ENCODE measurements at regions of chr11 and their contacts with region 1.

Region 1: DNA sequence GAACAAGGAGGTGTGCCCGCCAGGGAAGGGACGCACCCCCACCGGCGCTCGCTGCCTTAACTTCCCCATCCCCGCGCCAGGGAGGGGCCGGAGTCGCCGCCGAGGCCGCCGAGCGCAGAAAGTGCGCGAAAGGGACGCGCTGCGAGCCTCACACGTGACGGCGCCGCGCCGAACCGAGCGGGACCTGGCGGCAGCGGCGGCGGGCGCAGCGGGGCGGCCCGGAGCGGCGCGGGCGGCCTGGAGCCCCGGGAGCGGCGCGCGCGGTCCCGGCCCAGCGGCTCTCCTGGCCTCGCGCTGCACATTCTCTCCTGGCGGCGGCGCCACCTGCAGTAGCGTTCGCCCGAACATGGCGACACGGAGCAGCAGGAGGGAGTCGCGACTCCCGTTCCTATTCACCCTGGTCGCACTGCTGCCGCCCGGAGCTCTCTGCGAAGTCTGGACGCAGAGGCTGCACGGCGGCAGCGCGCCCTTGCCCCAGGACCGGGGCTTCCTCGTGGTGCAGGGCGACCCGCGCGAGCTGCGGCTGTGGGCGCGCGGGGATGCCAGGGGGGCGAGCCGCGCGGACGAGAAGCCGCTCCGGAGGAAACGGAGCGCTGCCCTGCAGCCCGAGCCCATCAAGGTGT is at the start of gene SORL1:
- DNase-seq: peak; percentile 72 to 87
- ATAC-seq: peak; percentile 57 to 75 (median 70)
- H3K4me3 ChIP-seq: peak within 1 kb of the TSS; percentile 89
- H3K4me3 Mint-ChIP-seq: peak within 1 kb of the TSS; percentile 99
- H3K27ac ChIP-seq: peak within 1 kb of the TSS; percentile 82
- H3K27ac Mint-ChIP-seq: peak within 1 kb of the TSS; percentile 98 to 99
- H3K4me1 ChIP-seq: peaks cover 80% of the 10 kb centered on the region
- H3K4me1 Mint-ChIP-seq: peaks cover 89% of the 10 kb centered on the region in 2 donors
- H3K27me3 ChIP-seq: no peaks in the 10 kb centered on the region
- H3K27me3 Mint-ChIP-seq: no peaks in the 10 kb centered on the region
- CTCF ChIP-seq: peak; percentile 42
- total RNA-seq, gene SORL1: 386 to 519 (median 456) TPM

Region 2: GRCh38 chr11:121292495-121293287 is 159.4 kb before region 1 on chr11 and contains the start of gene SC5D:
- intact Hi-C with region 1: loop called (anchors 2 kb)
- DNase-seq: peak; percentile 95 to 98
- ATAC-seq: peak; percentile 92 to 98 (median 95)
- H3K4me3 ChIP-seq: peak within 1 kb of the TSS; percentile 63
- H3K4me3 Mint-ChIP-seq: peak within 1 kb of the TSS; percentile 97
- H3K27ac ChIP-seq: peak within 1 kb of the TSS; percentile 89
- H3K27ac Mint-ChIP-seq: peak within 1 kb of the TSS; percentile 96 to 99
- H3K4me1 ChIP-seq: peaks cover 10% of the 10 kb centered on the region
- H3K4me1 Mint-ChIP-seq: peaks cover 32 to 42% of the 10 kb centered on the region in 2 donors
- H3K27me3 ChIP-seq: no peaks in the 10 kb centered on the region
- H3K27me3 Mint-ChIP-seq: no peaks in the 10 kb centered on the region
- CTCF ChIP-seq: no peak
- total RNA-seq, gene SC5D: 17.2 to 18.6 (median 17.2) TPM

Region 3: DNA sequence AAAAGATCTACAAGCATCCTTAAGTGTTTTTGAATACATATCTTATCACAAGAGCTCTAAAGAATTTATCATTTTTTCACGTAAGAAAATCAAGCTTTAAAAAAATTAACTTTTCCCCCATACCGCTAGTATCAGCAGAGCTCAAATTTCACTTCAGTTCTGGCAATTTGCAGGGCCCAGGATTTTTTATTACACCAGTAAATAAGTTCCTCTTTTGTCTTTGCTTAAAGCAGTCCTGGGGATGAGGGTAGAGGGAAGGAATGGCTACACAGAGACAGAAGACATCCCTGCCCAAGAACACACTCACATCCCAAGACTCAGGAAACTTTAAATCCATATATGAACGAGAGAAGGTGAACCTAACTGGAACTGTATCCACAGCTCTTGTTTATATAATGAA is 22.5 kb before region 1 on chr11:
- intact Hi-C with region 1: loop called (anchors 2 kb)
- DNase-seq: no peak
- ATAC-seq: no peak
- H3K4me3 ChIP-seq: no peak overlapping the region
- H3K4me3 Mint-ChIP-seq: no peak overlapping the region
- H3K27ac ChIP-seq: peak overlapping the region; percentile 34
- H3K27ac Mint-ChIP-seq: no peak overlapping the region
- H3K4me1 ChIP-seq: peaks cover 10% of the 10 kb centered on the region
- H3K4me1 Mint-ChIP-seq: peaks cover 5% of the 10 kb centered on the region in 2 donors
- H3K27me3 ChIP-seq: no peaks in the 10 kb centered on the region
- H3K27me3 Mint-ChIP-seq: peaks cover 0 to 3% of the 10 kb centered on the region in 2 donors
- CTCF ChIP-seq: no peak

Region 4: DNA sequence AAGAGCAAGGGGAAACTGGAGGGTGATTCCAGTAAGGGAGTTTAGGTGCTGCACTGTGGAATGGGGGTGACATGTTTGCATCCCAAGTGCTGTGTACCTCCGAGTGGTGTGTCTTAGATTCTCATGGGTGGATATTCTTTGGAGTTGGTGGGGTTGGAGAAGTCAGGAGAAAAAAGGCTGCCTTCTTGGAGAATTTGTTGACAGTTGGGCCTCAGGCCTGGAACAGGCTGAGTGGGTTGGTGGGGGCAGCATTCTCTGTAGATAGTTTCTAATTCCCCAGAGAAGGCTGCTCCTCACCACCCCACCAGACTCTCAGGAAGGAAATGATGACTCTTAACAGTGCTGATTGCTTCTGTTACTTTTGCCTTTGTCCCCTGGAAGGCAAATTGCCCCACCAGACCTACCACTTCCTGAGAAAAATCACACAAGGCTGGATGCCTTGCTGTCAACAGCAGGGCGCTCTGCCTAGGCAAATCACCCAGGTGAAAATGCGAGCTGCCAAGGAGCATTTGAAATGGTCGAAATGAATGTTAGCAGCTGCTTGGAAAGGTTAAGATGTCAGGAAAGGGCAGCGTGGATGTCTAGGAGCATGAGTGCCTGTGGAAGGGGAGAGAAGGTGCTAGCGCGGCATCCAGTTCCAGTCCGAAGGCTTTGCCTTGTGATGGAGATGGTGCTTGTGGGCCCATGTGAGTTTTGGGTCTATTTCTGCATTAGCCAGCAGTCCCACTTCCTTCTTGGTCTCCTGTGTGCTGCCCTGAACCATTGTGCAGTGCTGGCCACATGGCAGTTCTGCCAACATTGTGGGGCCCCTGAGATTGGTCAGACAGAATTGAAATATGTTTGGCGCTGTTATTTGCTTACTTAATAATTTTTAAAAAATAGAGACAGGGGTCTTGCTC is 30.4 kb after region 1 on chr11:
- intact Hi-C with region 1: loop called (anchors 1 kb)
- DNase-seq: peak; percentile 72 to 87
- ATAC-seq: peak; percentile 69 to 87 (median 77)
- H3K4me3 ChIP-seq: peak overlapping the region; percentile 41
- H3K4me3 Mint-ChIP-seq: peak overlapping the region; percentile 89
- H3K27ac ChIP-seq: peak overlapping the region; percentile 93
- H3K27ac Mint-ChIP-seq: peak overlapping the region; percentile 94 to 95
- H3K4me1 ChIP-seq: peaks cover 94% of the 10 kb centered on the region
- H3K4me1 Mint-ChIP-seq: peaks cover 59 to 87% of the 10 kb centered on the region in 2 donors
- H3K27me3 ChIP-seq: no peaks in the 10 kb centered on the region
- H3K27me3 Mint-ChIP-seq: no peaks in the 10 kb centered on the region
- CTCF ChIP-seq: no peak

Region 5: GRCh38 chr11:121514432-121515334 is 62.6 kb after region 1 on chr11:
- intact Hi-C with region 1: loop called (anchors 1 kb)
- DNase-seq: peak; percentile 22 to 40
- ATAC-seq: peak; percentile 68 to 79 (median 73)
- H3K4me3 ChIP-seq: no peak overlapping the region
- H3K4me3 Mint-ChIP-seq: peak overlapping the region; percentile 64
- H3K27ac ChIP-seq: peak overlapping the region; percentile 87
- H3K27ac Mint-ChIP-seq: peak overlapping the region; percentile 95
- H3K4me1 ChIP-seq: peaks cover 46% of the 10 kb centered on the region
- H3K4me1 Mint-ChIP-seq: peaks cover 72 to 80% of the 10 kb centered on the region in 2 donors
- H3K27me3 ChIP-seq: no peaks in the 10 kb centered on the region
- H3K27me3 Mint-ChIP-seq: no peaks in the 10 kb centered on the region
- CTCF ChIP-seq: no peak

Region 6: GRCh38 chr11:121525376-121525775 is 73.3 kb after region 1 on chr11:
- intact Hi-C with region 1: no loop called
- DNase-seq: no peak
- ATAC-seq: no peak
- H3K4me3 ChIP-seq: no peak overlapping the region
- H3K4me3 Mint-ChIP-seq: no peak overlapping the region
- H3K27ac ChIP-seq: no peak overlapping the region
- H3K27ac Mint-ChIP-seq: peak overlapping the region; percentile 38 to 54
- H3K4me1 ChIP-seq: peaks cover 12% of the 10 kb centered on the region
- H3K4me1 Mint-ChIP-seq: peaks cover 43 to 53% of the 10 kb centered on the region in 2 donors
- H3K27me3 ChIP-seq: no peaks in the 10 kb centered on the region
- H3K27me3 Mint-ChIP-seq: no peaks in the 10 kb centered on the region
- CTCF ChIP-seq: no peak

Measured in natural killer cell (primary cell).